ENCODE measurements at regions of chr2 and their contacts with region 1.

Region 1: GRCh38 chr2:241355983-241356870 is at the start of gene FARP2:
- DNase-seq: peak; percentile 98
- ATAC-seq: peak; percentile 72
- H3K4me3 ChIP-seq: peak within 1 kb of the TSS; percentile 83 to 96 (median 94)
- H3K27ac ChIP-seq: peak within 1 kb of the TSS; percentile 80
- H3K4me1 ChIP-seq: peaks cover 84% of the 10 kb centered on the region
- H3K27me3 ChIP-seq: no peaks in the 10 kb centered on the region; a peak in 1 of 5 replicates
- CTCF ChIP-seq: 0 out of 2 replicates have a peak, but pooled peaks have one; percentile 1
- EP300 ChIP-seq: no peak
- POLR2A ChIP-seq: peak; percentile 85 to 95
- RAD21 ChIP-seq: peak; percentile 42
- total RNA-seq, gene FARP2: 43.3 and 45.4 TPM in 2 replicates

Region 2: DNA sequence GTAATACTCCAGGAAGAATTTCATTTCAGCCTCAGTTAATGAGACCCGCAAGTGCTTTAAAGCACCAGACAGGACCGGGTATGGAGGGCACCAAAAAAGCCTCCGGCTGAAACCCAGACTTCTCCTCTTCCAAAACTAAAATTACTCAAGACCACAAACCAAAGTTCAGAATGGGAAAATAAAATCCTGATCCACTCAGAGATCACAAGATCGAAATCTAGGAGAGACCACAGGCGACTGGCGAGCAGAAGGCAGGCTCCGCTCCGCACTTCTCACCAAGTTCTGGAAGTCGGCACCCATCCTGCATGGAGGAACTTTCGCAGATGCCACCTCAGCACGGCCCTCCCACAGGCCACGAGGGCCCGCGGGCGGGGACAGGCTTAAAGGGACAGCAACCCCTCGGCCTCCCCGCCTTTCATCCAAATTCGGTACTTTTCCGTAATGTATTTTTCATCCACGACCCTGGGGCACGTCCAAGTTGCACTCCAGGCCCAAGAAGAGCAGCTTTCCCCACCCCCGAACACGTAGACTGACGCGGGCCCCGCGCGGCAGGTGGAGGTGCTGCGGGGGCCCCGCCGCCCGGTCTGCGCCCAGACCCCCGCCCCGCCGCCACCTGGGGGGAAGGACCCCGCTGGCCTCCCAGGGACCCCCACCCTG is 84.5 kb before region 1 on chr2:
- CTCF ChIA-PET with region 1: no interaction called
- POLR2A ChIA-PET with region 1: interaction called, 3 read pairs
- in situ Hi-C with region 1: no loop called
- intact Hi-C with region 1: loop called (anchors 10 kb)
- DNase-seq: peak; percentile 76
- ATAC-seq: peak; percentile 66
- H3K4me3 ChIP-seq: peak overlapping the region; percentile 75 to 91 (median 80)
- H3K27ac ChIP-seq: peak overlapping the region; percentile 85
- H3K4me1 ChIP-seq: peaks cover 76% of the 10 kb centered on the region
- H3K27me3 ChIP-seq: no peaks in the 10 kb centered on the region; a peak in 1 of 5 replicates
- CTCF ChIP-seq: no peak
- EP300 ChIP-seq: no peak; a peak in 1 of 4 replicates
- POLR2A ChIP-seq: peak; percentile 66 to 85
- RAD21 ChIP-seq: no peak

Region 3: GRCh38 chr2:241366678-241367077 is 10.5 kb after region 1 on chr2:
- CTCF ChIA-PET with region 1: no interaction called
- POLR2A ChIA-PET with region 1: no interaction called
- in situ Hi-C with region 1: no loop called
- intact Hi-C with region 1: no loop called
- DNase-seq: no peak
- ATAC-seq: no peak
- H3K4me3 ChIP-seq: no peak overlapping the region
- H3K27ac ChIP-seq: no peak overlapping the region
- H3K4me1 ChIP-seq: peaks cover 51% of the 10 kb centered on the region
- H3K27me3 ChIP-seq: no peaks in the 10 kb centered on the region
- CTCF ChIP-seq: no peak
- EP300 ChIP-seq: no peak
- POLR2A ChIP-seq: no peak
- RAD21 ChIP-seq: no peak

Region 4: DNA sequence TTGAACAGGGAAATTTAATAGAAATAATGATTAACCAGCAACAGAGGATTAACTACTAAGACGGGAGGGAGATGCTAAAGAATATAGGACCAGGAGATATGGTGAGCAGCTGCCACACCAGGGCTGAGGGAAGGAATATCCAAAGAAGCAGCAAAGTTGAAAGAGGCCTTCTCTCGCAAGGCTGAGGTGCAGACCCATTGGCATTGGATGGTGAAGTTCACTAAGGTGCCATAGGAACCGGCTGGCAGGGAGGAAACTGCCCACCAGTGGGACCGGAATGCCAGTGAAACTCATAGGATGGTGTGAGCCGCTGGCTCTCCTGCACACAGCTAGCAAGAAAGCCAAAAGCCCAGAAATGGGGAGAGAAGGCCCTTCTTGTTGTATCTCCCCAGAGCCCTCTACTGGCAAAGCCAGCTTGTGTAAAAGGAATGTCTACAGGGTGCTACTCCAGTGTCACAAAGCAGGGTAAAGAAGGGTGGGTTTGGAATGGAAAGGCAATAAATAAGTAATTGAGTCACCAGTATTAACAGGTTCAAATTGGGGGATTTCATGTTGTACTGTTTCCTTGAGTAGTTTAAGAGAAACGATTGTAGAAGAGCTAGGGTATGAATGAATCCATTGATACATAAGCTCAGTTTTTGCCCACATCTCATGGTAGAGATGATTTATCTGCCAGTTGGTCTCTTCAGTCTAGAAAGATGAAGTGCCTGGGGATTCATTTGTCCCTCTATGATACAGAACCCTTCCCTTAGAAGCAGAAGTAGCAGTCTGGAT is 35.9 kb after region 1 on chr2:
- CTCF ChIA-PET with region 1: interaction called, 3 read pairs
- POLR2A ChIA-PET with region 1: interaction called, 6 read pairs
- in situ Hi-C with region 1: no loop called
- intact Hi-C with region 1: loop called (anchors 2 kb)
- DNase-seq: peak; percentile 73
- ATAC-seq: peak; percentile 99
- H3K4me3 ChIP-seq: no peak overlapping the region
- H3K27ac ChIP-seq: no peak overlapping the region
- H3K4me1 ChIP-seq: no peaks in the 10 kb centered on the region
- H3K27me3 ChIP-seq: no peaks in the 10 kb centered on the region
- CTCF ChIP-seq: peak; percentile 69
- EP300 ChIP-seq: no peak
- POLR2A ChIP-seq: no peak
- RAD21 ChIP-seq: peak; percentile 64

Region 5: DNA sequence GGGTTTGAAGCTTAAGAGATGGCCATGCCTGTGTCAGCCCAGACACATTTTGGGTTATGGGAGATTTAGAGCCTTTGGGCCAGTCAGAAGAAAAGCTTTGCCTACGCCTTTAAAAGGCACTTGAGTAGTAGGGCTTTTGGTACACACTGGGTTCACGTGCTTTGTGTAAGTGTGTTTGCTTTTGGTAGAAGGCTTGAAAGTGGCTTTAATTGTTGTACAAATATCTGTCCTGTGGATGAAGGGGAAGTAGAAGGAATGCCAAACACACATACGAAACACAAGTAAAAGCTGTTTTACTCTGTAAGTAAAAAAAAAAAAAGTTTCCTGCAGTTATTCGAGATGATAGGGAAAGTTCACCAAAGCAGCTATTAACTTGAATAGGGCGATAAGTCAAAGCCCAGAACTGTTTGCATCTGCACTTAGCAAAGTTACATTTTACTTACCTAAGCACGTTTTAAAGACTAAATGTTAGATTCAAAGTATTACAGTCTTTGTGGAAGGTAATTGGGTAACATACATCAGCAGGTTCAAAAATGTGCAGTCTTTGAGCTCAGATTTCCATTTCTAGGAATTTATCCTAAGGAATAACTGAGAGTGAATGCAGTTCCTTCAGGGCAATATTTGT is 76.7 kb after region 1 on chr2:
- CTCF ChIA-PET with region 1: no interaction called
- POLR2A ChIA-PET with region 1: no interaction called
- in situ Hi-C with region 1: no loop called
- intact Hi-C with region 1: loop called (anchors 2 kb)
- DNase-seq: peak; percentile 94
- ATAC-seq: peak; percentile 95
- H3K4me3 ChIP-seq: no peak overlapping the region; a peak in 1 of 6 replicates
- H3K27ac ChIP-seq: peak overlapping the region; percentile 66
- H3K4me1 ChIP-seq: peaks cover 28% of the 10 kb centered on the region
- H3K27me3 ChIP-seq: no peaks in the 10 kb centered on the region
- CTCF ChIP-seq: no peak
- EP300 ChIP-seq: peak in 1 of 2 experiments; percentile 96; a peak in 2 of 4 replicates
- POLR2A ChIP-seq: no peak
- RAD21 ChIP-seq: no peak

Region 6: DNA sequence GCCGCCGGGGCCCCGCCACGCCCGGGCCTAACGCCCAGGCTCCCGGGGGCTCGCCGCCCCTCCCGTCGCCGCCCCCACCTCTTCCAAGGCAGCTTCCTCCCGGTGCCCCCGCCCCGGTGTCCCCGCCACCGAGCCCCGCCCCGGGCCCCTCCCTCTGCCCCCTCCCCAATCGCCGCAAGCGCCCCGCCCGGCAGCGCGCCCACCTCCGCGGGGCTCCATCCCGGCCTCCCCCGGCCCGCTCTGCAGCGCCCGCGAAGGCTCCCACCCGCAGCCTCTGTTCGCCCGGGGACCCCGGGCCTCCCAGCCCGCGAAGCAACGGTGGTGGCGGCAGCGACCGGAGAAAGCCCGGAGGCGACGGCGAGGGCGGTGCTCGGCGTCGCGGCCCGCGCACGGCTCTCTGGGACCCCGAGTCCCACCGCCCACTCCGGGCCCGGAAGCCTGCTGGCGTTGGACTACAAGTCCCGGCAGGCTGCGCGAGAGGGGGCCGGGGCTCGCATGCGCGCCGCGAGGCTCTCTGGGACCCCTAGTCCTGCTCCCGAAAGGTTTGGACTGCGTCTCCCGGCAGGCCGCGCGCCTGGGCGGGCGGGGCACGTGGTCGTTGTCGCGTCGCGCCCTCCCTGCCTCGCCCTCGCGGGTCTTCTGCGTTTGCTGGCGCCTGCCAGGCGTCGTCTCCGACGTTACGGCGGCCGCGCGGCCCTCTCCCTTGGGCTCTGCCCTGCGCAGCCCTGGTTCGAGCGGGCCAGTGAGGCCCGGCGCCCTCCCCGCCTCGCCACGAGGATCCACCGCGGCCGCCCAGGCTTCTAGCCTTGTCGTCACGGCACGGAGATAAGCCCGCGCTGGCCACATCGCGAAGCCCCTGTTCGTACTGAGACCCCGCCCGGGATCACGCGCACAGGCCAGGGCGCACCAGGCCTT is 152.3 kb after region 1 on chr2 and contains the start of gene STK25:
- CTCF ChIA-PET with region 1: no interaction called
- POLR2A ChIA-PET with region 1: no interaction called
- in situ Hi-C with region 1: no loop called
- intact Hi-C with region 1: loop called (anchors 10 kb)
- DNase-seq: peak; percentile 97
- ATAC-seq: peak; percentile 91
- H3K4me3 ChIP-seq: peak within 1 kb of the TSS; percentile 85 to 98 (median 89)
- H3K27ac ChIP-seq: peak within 1 kb of the TSS; percentile 70
- H3K4me1 ChIP-seq: peaks cover 62% of the 10 kb centered on the region
- H3K27me3 ChIP-seq: no peaks in the 10 kb centered on the region
- CTCF ChIP-seq: no peak; the same call in 1 of the 2 replicates
- EP300 ChIP-seq: peak in 1 of 2 experiments; percentile 35; a peak in 1 of 4 replicates
- POLR2A ChIP-seq: peak in 1 of 2 experiments; percentile 57; a peak in 2 of 4 replicates
- RAD21 ChIP-seq: no peak; the same call in 1 of the 2 replicates
- total RNA-seq, gene STK25: 123 and 177 TPM in 2 replicates

Measured in HepG2 (cell line).